GM12878 (cell line): ENCODE measurements at regions of chr12 and their contacts with region 1.

Region 1: DNA sequence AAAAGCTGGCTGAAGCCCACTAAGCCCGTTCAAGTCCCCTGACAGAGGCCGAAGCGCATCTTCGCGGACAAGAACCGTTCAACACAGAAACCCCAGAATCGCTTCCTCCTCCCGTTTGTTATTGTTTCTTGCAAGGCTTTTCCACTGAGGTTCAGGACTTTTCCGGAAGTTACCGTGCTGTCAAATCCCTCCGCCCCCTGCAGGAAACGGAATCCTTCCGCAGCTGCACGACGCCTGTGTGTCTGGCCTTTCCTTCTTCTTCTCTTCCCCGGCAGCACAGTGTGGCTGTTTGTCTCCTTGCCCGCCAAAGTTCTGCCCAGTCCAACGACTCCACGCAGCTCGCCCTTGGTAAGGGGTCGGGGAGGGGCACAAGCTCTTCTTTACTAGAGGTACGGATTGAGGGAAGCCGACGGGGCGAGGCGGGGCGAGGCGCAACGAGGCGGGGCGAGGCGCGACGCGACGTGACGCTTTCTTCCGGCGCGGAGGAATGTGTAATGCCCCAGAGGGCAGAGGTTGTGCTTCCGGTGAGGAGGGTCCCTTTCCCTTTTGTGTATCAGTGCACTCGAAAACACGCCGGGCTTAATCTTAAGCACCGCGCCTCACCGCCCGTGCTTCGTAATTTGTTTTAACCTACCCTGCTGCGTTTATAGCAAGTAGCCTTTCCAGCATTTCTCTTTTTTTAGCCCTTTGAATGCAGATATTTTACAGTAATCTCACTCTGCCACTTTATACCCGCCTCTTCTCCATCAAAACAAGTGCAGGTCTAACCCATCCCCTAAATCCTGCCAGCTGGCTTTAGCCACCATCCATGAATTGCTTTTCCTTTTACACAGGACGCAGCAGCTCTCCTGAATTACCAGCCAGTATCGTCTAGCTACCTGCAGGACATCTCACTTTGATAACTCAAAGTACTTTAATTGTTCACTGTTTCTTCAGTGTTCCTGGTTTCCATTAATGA is at the start of gene KDM5A:
- DNase-seq: peak; percentile 73
- ATAC-seq: peak; percentile 93
- H3K4me3 ChIP-seq: peak within 1 kb of the TSS; percentile 85
- H3K27ac ChIP-seq: peak within 1 kb of the TSS; percentile 87
- H3K4me1 ChIP-seq: no peaks in the 10 kb centered on the region
- H3K27me3 ChIP-seq: no peaks in the 10 kb centered on the region
- CTCF ChIP-seq: no peak
- EP300 ChIP-seq: peak in 1 of 2 experiments; percentile 25; a peak in 1 of 4 replicates
- POLR2A ChIP-seq: peak; percentile 80
- RAD21 ChIP-seq: no peak
- polyA plus RNA-seq, gene KDM5A: 9.0 to 10.5 TPM

Region 2: GRCh38 chr12:401235-402028 is 12.0 kb after region 1 on chr12 and contains the start of gene CCDC77:
- CTCF ChIA-PET with region 1: interaction called, 5 read pairs
- POLR2A ChIA-PET with region 1: interaction called, 23 read pairs
- RAD21 ChIA-PET with region 1: interaction called, 7 read pairs
- SMC1A ChIA-PET with region 1: interaction called, 23 read pairs
- in situ Hi-C with region 1: no loop called
- intact Hi-C with region 1: loop called (anchors 1 kb)
- DNase-seq: peak; percentile 86
- ATAC-seq: peak; percentile 100
- H3K4me3 ChIP-seq: peak within 1 kb of the TSS; percentile 89
- H3K27ac ChIP-seq: peak within 1 kb of the TSS; percentile 79
- H3K4me1 ChIP-seq: no peaks in the 10 kb centered on the region; the same call in 1 of the 2 replicates
- H3K27me3 ChIP-seq: no peaks in the 10 kb centered on the region
- CTCF ChIP-seq: peak; percentile 11 to 32 (median 25); a peak in 3 of 6 replicates
- EP300 ChIP-seq: no peak
- POLR2A ChIP-seq: peak; percentile 67; the same call in 1 of the 2 replicates
- RAD21 ChIP-seq: no peak
- polyA plus RNA-seq, gene CCDC77: 8.8 to 9.9 TPM